Endothelial cell of umbilical vein (primary cell): ENCODE measurements at regions of chr2 and their contacts with region 1.

Region 1: DNA sequence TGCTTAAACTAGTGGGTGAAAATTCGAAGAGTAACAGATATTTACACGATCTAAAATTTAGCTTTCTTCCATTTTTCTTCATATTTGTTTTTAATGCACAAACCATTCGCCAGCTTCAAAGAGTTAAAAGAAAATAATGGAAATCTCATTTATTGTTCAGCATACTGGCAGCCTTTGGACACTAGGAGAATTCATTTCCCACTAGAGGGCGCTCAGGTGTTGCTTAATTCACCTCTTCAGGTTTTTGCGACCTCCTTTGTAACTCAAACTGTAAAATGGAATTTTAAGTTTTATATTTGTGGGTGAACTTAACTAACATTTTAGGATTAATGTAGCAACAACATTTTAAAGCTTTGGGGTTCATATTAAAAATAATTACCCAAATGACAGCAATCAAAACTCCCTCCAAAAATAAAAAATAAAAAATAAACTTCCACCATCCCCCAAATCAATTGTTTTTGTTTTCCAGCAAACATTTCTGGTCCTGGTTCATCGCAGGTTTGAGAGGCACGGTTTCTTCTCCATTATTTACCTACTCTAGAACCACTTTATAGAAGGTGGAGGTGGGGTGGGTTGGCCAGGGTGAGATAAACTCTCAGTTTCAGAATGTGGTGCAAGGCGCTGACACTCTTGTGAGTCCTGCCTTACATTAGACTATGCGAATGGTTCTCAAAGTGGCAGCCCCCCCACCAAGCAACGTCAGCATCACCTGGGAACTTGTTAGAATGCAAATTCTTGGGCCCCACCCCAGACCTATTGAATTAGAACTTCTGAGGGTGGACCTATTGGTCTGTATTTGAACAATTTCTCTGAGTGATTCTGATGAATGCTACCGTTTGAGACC is 24.7 kb upstream of the PNPT1 start:
- DNase-seq: peak; percentile 77
- H3K4me3 ChIP-seq: no peak overlapping the region
- H3K27ac ChIP-seq: no peak overlapping the region
- H3K4me1 ChIP-seq: peaks cover 7% of the 10 kb centered on the region
- H3K27me3 ChIP-seq: no peaks in the 10 kb centered on the region
- CTCF ChIP-seq: peak; percentile 55 to 65
- POLR2A ChIP-seq: no peak

Region 2: DNA sequence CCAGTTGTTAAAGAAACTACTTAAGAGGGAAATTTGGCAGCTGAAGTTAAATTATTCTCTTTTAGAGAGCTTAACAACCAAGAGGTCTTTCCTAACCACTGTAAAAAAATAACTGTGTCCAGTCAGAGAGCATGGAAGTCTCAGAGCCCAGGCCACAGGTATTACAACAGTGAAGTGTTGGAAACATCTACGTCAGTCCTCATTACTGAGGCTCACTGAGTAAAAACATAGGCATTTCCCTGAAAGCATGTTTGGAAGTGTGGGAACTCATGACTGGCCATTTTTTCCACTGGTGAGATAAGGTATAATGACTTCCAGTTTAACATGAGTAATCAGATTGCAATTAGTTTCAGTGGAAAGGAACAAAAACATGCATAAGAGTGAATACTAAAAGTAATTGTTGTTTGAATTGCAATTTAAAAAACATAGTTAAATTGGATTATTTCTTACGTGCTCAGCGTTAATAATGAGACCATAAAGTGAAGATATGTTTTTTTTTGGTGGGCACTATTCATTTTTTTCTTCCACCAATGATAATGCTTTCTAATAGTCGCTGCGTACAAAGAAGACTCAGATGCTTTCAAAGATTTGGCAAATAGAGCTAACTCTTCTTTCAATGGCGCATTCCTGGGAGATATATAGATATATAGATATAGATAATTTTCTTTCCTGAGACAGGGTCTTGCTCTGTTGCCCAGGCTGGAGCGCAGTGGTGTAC is 144.4 kb after region 1 on chr2:
- CTCF ChIA-PET with region 1: interaction called, 7 read pairs
- POLR2A ChIA-PET with region 1: no interaction called
- dilution Hi-C with region 1: no loop called
- intact Hi-C with region 1: loop called (anchors 2 kb)
- DNase-seq: peak; percentile 98
- H3K4me3 ChIP-seq: no peak overlapping the region
- H3K27ac ChIP-seq: peak overlapping the region; percentile 92
- H3K4me1 ChIP-seq: peaks cover 54% of the 10 kb centered on the region
- H3K27me3 ChIP-seq: no peaks in the 10 kb centered on the region
- CTCF ChIP-seq: no peak
- POLR2A ChIP-seq: peak; percentile 80

Region 3: DNA sequence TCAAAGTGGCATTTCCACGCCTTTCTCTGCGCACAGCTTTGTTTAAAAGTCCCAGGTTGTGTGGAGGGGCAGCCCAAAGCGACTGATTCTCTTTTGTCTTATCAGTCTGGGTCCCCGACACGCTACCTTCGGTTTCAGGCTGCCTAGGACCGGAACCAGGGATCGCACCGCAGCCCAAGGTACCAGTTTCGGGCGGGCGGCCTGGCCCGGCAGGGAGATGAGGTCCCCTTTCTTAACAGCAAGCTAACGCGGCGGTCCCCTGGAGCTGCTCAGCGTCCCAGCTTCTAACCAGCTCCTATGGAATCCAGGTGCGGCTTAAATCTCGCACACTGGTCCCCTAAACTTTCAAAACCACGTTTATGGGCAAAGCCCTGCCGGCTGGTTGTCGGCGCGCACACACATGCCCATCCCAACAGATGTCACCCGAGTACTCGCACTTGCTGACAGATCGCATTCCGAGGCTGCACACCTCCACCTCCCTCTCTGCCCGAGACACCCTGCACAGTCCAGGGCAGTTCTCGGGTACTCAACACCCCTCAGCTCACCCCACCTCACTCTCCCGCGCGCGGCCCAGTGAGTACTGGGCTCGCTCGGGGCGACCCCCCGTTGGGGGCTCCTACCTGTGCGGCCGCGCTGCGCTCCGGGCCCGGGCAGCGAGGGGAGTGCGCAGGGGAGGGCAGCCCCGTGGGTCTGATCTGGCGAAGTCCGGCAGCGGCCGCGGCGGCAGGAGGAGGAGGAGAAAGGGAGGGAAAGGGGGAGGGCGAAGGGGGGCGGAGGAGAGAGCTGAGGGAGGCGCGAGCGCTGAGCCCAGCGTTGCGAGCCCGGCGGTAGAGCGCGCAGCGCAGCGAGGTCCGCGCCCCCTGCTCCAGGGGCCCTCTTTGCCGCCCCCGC is 204.9 kb after region 1 on chr2 and contains the start of gene EFEMP1:
- CTCF ChIA-PET with region 1: no interaction called
- POLR2A ChIA-PET with region 1: no interaction called
- dilution Hi-C with region 1: no loop called
- intact Hi-C with region 1: loop called (anchors 5 kb)
- DNase-seq: peak; percentile 87
- H3K4me3 ChIP-seq: peak within 1 kb of the TSS; percentile 57 to 97 (median 91)
- H3K27ac ChIP-seq: peak within 1 kb of the TSS; percentile 82
- H3K4me1 ChIP-seq: peaks cover 43% of the 10 kb centered on the region
- H3K27me3 ChIP-seq: no peaks in the 10 kb centered on the region
- CTCF ChIP-seq: peak in 1 of 2 donors; percentile 4
- POLR2A ChIP-seq: peak; percentile 96
- total RNA-seq, gene EFEMP1: 2,354 and 2,981 TPM in 2 replicates

Region 4: GRCh38 chr2:56749152-56749752 is 1030.9 kb after region 1 on chr2:
- CTCF ChIA-PET with region 1: no interaction called
- POLR2A ChIA-PET with region 1: no interaction called
- dilution Hi-C with region 1: no loop called
- intact Hi-C with region 1: loop called (anchors 10 kb)
- DNase-seq: peak; percentile 55
- H3K4me3 ChIP-seq: no peak overlapping the region
- H3K27ac ChIP-seq: no peak overlapping the region
- H3K4me1 ChIP-seq: no peaks in the 10 kb centered on the region
- H3K27me3 ChIP-seq: no peaks in the 10 kb centered on the region
- CTCF ChIP-seq: peak; percentile 25 to 29
- POLR2A ChIP-seq: no peak

Region 5: DNA sequence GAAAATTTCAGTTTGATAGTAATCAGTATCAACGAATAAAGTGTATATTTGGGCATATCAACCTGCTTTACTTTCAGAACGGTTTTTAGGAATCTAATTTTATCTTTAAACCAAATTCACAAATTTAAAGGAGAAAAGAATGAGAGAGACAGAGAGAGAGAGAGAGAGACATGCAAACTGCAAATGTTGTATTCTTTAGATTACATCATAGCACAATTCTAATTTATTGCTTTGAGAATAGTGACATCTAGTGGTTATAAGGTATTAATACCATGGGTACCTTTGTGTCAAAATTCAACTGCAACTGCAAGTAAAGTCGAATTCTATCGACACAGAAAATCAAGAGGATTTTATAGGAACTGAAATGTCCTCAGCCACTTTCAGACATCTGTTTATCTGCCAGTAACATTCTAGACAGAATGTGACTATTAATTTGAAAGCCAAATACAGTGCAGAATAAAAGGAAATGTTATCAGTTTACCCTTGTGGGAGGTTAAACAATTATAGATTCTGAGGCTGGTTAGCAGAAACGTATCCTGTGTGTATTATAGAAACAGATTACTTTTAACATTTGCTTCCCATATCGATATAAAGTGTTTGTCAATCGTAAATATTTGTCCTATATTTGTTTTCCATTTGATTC is 1798.4 kb after region 1 on chr2:
- CTCF ChIA-PET with region 1: no interaction called
- POLR2A ChIA-PET with region 1: no interaction called
- dilution Hi-C with region 1: no loop called
- intact Hi-C with region 1: loop called (anchors 5 kb)
- DNase-seq: peak; percentile 58
- H3K4me3 ChIP-seq: no peak overlapping the region
- H3K27ac ChIP-seq: no peak overlapping the region
- H3K4me1 ChIP-seq: no peaks in the 10 kb centered on the region
- H3K27me3 ChIP-seq: peaks cover 0 to 1% of the 10 kb centered on the region in 2 experiments
- CTCF ChIP-seq: peak; percentile 16 to 24
- POLR2A ChIP-seq: no peak